ENCODE measurements at regions of chr7 and their contacts with region 1.

Region 1: GRCh38 chr7:149147072-149147751 is at the start of gene ZNF398:
- DNase-seq: peak; percentile 74
- H3K4me3 Mint-ChIP-seq: peak within 1 kb of the TSS; percentile 90
- H3K27ac Mint-ChIP-seq: peak within 1 kb of the TSS; percentile 93
- H3K4me1 Mint-ChIP-seq: peaks cover 24% of the 10 kb centered on the region
- H3K27me3 Mint-ChIP-seq: no peaks in the 10 kb centered on the region
- total RNA-seq, gene ZNF398: 15.9 and 16.9 TPM in 2 replicates

Region 2: DNA sequence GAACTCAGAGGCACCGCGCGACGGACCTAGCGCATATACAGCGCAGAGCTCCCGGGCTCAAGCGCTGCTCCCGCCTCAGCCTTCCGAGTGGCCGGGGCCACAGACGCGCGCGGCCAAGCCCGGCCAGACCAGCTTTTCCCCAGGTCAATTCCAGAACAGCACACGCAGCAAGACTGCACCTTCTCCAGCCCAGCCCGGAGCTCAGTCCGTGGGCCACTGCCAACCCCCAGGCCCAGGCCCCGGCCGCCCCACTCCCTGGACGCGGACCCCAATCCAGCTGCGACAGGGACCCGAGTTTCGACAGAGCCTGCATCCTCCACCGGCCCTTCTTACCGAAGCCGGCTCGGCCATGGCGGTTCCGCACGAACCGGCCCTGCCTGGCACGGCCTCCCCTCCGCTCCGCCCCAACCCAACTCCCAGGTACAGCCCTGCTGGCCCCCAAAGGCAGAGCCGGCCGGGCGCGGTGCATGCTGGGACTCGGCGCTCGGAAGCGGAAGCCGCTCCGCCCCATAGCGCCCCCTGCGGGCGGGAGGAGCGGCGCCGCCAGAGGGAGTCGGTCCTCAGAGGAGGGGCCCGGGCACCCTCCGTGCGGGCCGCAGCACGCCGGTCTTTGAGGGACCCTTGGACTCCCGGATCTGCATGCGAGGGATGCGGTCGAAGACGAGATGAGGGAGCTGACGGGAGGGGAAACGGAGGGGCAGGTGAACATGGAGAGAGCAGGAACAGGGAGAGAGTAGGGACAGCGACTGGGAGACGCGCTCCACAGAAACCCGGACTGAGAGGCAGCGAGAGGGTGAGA is 21.1 kb before region 1 on chr7 and contains the start of gene ZNF425:
- intact Hi-C with region 1: loop called (anchors 1 kb)
- DNase-seq: peak; percentile 91
- H3K4me3 Mint-ChIP-seq: peak within 1 kb of the TSS; percentile 100
- H3K27ac Mint-ChIP-seq: peak within 1 kb of the TSS; percentile 100
- H3K4me1 Mint-ChIP-seq: peaks cover 19% of the 10 kb centered on the region
- H3K27me3 Mint-ChIP-seq: no peaks in the 10 kb centered on the region
- total RNA-seq, gene ZNF425: 0.39 and 1.0 TPM in 2 replicates

Region 3: DNA sequence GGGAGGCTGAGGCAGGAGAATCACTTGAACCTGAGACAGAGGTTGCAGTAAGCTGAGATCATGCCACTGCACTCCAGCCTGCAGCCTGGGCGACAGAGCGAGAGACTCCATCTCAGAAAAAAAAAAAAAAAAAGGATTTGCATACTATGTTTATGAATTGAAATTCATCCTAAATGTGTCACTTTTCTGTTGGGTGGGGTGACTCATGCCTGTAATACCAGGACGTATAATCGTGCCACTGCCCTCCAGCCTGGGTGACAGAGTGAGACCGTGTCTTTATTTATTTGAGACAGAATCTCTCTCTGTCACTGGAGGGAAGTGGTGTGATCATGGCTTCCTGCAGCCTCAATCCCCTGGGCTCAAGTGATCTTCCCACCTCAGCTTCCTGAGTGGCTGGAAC is 98.0 kb after region 1 on chr7:
- intact Hi-C with region 1: loop called (anchors 5 kb)
- DNase-seq: no peak
- H3K4me3 Mint-ChIP-seq: peak overlapping the region; percentile 3
- H3K27ac Mint-ChIP-seq: peak overlapping the region; percentile 81
- H3K4me1 Mint-ChIP-seq: peaks cover 46% of the 10 kb centered on the region
- H3K27me3 Mint-ChIP-seq: no peaks in the 10 kb centered on the region

Region 4: GRCh38 chr7:149422129-149422913 is 275.1 kb after region 1 on chr7:
- intact Hi-C with region 1: loop called (anchors 10 kb)
- DNase-seq: peak; percentile 68
- H3K4me3 Mint-ChIP-seq: peak overlapping the region; percentile 71
- H3K27ac Mint-ChIP-seq: peak overlapping the region; percentile 55
- H3K4me1 Mint-ChIP-seq: peaks cover 3% of the 10 kb centered on the region
- H3K27me3 Mint-ChIP-seq: peaks cover 5% of the 10 kb centered on the region

Measured in activated T-helper 2 cell treated with anti-CD3 and anti-CD28 coated beads, Interferon-gamma antibody, Interleukin-2, Interleukin-4, amounts not matched to agents 10 μg/mL and 5 μg/mL and 100 μg/mL, durations not matched to agents 14 hours and 24 hours and 36 hours (primary cell).